ENCODE measurements at regions of chr12 and their contacts with region 1.

Region 1: DNA sequence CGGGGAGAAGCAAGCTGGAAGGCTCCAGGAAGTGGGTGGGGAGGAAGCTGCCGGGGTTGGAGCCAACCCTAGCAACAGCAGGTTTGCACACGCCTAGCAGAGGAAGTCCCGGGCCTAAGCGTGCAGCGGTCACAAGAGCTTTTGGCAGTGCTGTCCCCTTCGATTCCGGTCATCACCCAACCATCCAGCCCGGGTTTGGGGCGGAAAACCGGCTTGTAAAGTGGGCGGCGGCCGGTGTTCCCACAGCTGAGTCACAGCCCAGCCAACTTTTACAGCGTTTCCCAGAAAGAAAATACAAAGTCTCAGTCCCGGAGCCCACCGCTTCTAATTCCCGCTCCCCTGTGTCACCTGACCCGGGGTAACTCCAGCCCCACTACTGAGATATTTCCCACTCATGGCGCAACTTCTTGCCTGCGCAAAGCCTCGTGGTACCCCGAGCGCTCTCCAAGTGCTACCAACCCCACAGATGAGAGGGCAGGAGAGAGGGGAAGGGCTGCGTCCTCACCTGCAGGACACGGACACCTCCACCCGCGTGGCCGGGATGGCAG is 385 bp downstream of the CPNE8 start:
- DNase-seq: peak; percentile 68 to 79
- ATAC-seq: peak; percentile 76 to 87
- H3K4me3 ChIP-seq: peak overlapping the region; percentile 51 to 69 (median 62)
- H3K27ac ChIP-seq: peak overlapping the region; percentile 80 to 92 (median 85)
- H3K4me1 ChIP-seq: peaks cover 0 to 3% of the 10 kb centered on the region in 2 donors
- H3K27me3 ChIP-seq: peaks cover 3 to 11% (median 4%) of the 10 kb centered on the region in 3 donors
- CTCF ChIP-seq: no peak
- POLR2A ChIP-seq: no peak

Region 2: GRCh38 chr12:38448991-38449390 is 456.0 kb before region 1 on chr12:
- in situ Hi-C with region 1: no loop called
- intact Hi-C with region 1: no loop called
- DNase-seq: no peak
- ATAC-seq: no peak
- H3K4me3 ChIP-seq: no peak overlapping the region
- H3K27ac ChIP-seq: no peak overlapping the region
- H3K4me1 ChIP-seq: no peaks in the 10 kb centered on the region
- H3K27me3 ChIP-seq: no peaks in the 10 kb centered on the region
- CTCF ChIP-seq: no peak
- POLR2A ChIP-seq: no peak

Region 3: GRCh38 chr12:39116867-39117266 is 211.9 kb after region 1 on chr12:
- in situ Hi-C with region 1: no loop called
- intact Hi-C with region 1: no loop called
- DNase-seq: no peak
- ATAC-seq: no peak
- H3K4me3 ChIP-seq: no peak overlapping the region
- H3K27ac ChIP-seq: no peak overlapping the region
- H3K4me1 ChIP-seq: no peaks in the 10 kb centered on the region
- H3K27me3 ChIP-seq: no peaks in the 10 kb centered on the region
- CTCF ChIP-seq: no peak
- POLR2A ChIP-seq: no peak

Region 4: DNA sequence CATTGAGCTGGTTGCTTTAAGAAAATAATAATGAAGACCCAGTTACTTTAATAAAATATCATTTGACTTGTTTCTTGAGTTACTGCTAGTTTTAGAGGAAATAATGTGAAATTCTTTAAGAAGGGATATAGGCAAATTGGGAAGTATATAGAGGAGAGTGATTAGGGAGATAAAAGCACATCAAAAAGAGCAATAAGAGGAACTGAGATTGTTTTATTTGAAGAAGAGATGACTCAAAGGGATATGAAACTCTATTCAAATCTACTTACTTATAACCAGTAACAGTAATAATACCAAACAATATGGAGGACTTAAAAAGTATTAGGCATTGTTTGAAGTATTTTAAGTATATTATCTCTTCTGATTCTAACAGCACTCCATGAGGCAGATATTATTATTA is 1356.9 kb after region 1 on chr12:
- in situ Hi-C with region 1: no loop called
- intact Hi-C with region 1: loop called (anchors 5 kb)
- DNase-seq: no peak
- ATAC-seq: no peak
- H3K4me3 ChIP-seq: no peak overlapping the region
- H3K27ac ChIP-seq: no peak overlapping the region
- H3K4me1 ChIP-seq: no peaks in the 10 kb centered on the region
- H3K27me3 ChIP-seq: no peaks in the 10 kb centered on the region
- CTCF ChIP-seq: no peak
- POLR2A ChIP-seq: no peak